Activated T-helper 1 cell treated with anti-CD3 and anti-CD28 coated beads, Interleukin-12 subunit alpha, Interleukin-12 subunit beta, Interleukin-2, Interleukin-4 antibody, amounts not matched to agents 30 ng/mL and 10 ng/mL and 1 ng/mL, durations not matched to agents 14 hours and 24 hours and 36 hours (primary cell): ENCODE measurements at regions of chr12 and their contacts with region 1.

Region 1: GRCh38 chr12:132614861-132615578 is 3.6 kb upstream of the P2RX2 start:
- DNase-seq: peak; percentile 66
- H3K4me3 Mint-ChIP-seq: no peak overlapping the region
- H3K27ac Mint-ChIP-seq: no peak overlapping the region
- H3K4me1 Mint-ChIP-seq: peaks cover 8% of the 10 kb centered on the region
- H3K27me3 Mint-ChIP-seq: peaks cover 34% of the 10 kb centered on the region

Region 2: GRCh38 chr12:131928711-131929580 is 686.1 kb before region 1 on chr12 and contains the start of gene PUS1:
- intact Hi-C with region 1: no loop called
- DNase-seq: peak; percentile 93
- H3K4me3 Mint-ChIP-seq: peak within 1 kb of the TSS; percentile 98
- H3K27ac Mint-ChIP-seq: peak within 1 kb of the TSS; percentile 95
- H3K4me1 Mint-ChIP-seq: peaks cover 13% of the 10 kb centered on the region
- H3K27me3 Mint-ChIP-seq: no peaks in the 10 kb centered on the region
- total RNA-seq, gene PUS1: 92.1 and 100.0 TPM in 2 replicates

Region 3: GRCh38 chr12:132103542-132104308 is 511.3 kb before region 1 on chr12:
- intact Hi-C with region 1: no loop called
- DNase-seq: no peak
- H3K4me3 Mint-ChIP-seq: no peak overlapping the region
- H3K27ac Mint-ChIP-seq: no peak overlapping the region
- H3K4me1 Mint-ChIP-seq: no peaks in the 10 kb centered on the region
- H3K27me3 Mint-ChIP-seq: no peaks in the 10 kb centered on the region

Region 4: GRCh38 chr12:132153501-132154340 is 461.3 kb before region 1 on chr12:
- intact Hi-C with region 1: loop called (anchors 2 kb)
- DNase-seq: peak; percentile 61
- H3K4me3 Mint-ChIP-seq: no peak overlapping the region
- H3K27ac Mint-ChIP-seq: no peak overlapping the region
- H3K4me1 Mint-ChIP-seq: no peaks in the 10 kb centered on the region
- H3K27me3 Mint-ChIP-seq: no peaks in the 10 kb centered on the region

Region 5: DNA sequence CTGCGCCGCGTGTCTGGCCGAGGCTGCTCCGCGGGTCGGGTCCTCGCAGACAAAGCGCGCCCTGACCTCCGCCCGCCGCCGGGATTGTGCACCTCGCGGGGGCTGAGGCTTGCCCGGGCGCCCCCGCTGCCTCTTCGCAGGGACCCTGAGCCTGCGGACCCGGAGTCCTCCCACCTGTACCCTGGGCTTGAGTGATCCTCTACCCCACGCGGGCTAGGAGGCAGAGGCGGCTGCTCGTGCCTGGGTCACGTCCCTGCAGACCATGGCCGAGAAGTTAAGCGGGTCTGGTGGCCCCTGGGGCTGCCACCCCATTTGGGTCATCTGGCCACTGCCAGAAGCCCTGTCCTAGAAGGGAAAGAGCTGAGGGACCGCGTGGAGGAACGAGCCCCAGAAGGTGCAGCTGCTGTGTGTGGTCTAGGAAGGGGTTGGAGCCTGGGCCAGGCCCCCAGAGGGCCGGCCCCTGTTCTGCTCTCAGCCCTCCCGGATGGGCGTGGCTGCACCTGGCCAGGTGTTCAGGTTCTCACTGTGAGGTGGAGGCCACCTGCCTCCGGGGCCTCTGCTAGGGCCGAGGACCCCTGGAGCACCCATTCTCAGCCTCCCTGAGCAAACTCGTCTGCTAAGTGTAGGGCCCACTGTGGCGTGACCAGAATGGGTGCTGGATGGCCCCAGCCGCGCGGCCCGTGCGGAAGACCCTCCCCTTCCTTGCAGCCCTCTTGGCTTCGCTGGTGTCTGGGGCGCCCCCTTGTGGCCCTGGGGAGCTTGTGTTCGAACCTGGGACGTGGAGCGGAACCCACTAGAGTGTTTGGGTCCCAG is 54.2 kb before region 1 on chr12:
- intact Hi-C with region 1: loop called (anchors 1 kb)
- DNase-seq: peak; percentile 57
- H3K4me3 Mint-ChIP-seq: peak overlapping the region; percentile 80
- H3K27ac Mint-ChIP-seq: no peak overlapping the region
- H3K4me1 Mint-ChIP-seq: peaks cover 13% of the 10 kb centered on the region
- H3K27me3 Mint-ChIP-seq: peaks cover 5% of the 10 kb centered on the region

Region 6: DNA sequence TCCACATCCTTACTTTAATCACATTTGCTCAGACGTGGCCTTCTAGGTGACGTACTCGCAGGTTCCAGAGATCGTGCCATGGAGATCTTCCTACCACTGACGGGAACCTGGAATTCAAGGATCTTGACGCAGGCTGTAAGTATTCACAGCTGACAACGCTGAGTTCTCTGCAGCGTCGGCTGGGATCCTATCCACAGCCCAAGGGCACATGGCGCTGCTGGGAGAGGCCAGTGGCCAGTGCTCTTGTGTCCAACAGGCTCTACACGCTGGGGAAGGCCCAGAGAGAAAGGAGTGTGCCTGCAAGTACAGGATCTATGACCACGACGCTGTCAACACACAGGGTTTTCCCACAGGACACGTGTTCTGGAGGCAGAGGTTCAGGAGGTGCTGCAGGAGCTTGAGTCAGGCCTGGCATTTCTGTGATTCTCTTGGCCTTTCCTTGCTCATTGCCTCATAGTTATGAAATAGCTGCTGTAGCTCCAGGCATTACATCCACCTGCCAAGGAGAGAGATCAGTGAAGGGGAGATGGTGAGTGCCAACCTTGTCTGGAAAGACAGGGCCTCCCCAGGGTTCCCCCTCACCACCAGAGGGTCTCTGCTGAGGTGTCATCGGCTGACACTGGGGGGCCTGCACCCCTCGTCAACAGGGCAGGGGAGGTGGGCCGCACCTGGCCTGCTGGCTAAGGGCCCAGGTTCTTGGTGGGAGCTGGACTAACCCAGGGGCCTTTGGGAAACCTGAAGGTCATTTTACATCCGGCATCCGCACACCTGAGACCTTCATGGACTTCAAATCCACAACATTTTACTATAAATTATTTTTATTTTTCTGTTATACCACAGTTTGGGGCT is 26.0 kb before region 1 on chr12:
- intact Hi-C with region 1: no loop called
- DNase-seq: no peak
- H3K4me3 Mint-ChIP-seq: no peak overlapping the region
- H3K27ac Mint-ChIP-seq: no peak overlapping the region
- H3K4me1 Mint-ChIP-seq: peaks cover 3% of the 10 kb centered on the region
- H3K27me3 Mint-ChIP-seq: peaks cover 3% of the 10 kb centered on the region

Region 7: GRCh38 chr12:132600048-132601032 is 14.7 kb before region 1 on chr12:
- intact Hi-C with region 1: loop called (anchors 2 kb)
- DNase-seq: no peak
- H3K4me3 Mint-ChIP-seq: peak overlapping the region; percentile 67
- H3K27ac Mint-ChIP-seq: no peak overlapping the region
- H3K4me1 Mint-ChIP-seq: peaks cover 11% of the 10 kb centered on the region
- H3K27me3 Mint-ChIP-seq: peaks cover 52% of the 10 kb centered on the region

Region 8: DNA sequence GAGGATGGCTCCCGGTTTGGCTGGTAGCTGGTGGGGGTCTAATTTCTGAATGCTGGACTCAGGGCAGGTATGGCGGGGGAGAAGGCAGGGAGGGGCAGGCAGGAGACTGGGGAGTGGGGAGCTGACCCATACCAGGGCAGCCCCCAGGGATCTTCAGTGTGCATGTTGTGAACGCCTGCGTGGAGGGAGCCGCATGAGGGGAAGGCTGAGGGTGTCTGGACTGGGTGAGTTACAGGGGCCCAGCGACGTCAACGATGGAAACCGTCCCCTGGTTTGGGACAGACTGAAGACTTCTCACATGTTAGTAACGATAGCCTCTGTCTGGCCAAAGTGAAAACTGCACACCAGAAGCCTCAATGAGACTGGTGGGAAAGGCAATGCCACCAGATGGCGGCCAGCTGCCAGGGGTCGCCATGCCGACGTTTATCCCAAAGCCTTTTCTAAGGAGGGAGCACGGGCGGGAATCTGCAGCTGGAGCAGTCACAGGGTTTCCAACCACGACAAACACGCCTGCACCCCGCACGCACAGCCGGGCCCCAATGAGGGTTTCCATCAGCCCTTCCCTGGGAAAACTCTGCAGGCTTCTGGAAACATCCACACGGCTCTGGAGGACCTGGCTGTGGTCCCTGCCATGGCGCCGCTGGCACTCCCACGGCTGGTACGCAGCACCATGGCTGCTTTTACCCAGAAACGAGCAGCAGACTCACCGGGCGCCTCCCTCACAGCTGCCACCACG is 109.7 kb after region 1 on chr12:
- intact Hi-C with region 1: no loop called
- DNase-seq: no peak
- H3K4me3 Mint-ChIP-seq: no peak overlapping the region
- H3K27ac Mint-ChIP-seq: no peak overlapping the region
- H3K4me1 Mint-ChIP-seq: peaks cover 5% of the 10 kb centered on the region
- H3K27me3 Mint-ChIP-seq: no peaks in the 10 kb centered on the region